ENCODE measurements at regions of chr20 and their contacts with region 1.

Region 1: GRCh38 chr20:45823949-45824835 is 2.9 kb downstream of the TNNC2 start:
- DNase-seq: no peak
- H3K4me3 ChIP-seq: no peak overlapping the region
- H3K27me3 ChIP-seq: no peaks in the 10 kb centered on the region; the same call in 1 of the 2 replicates
- CTCF ChIP-seq: peak; percentile 58

Region 2: GRCh38 chr20:45781391-45781931 is 42.7 kb before region 1 on chr20:
- CTCF ChIA-PET with region 1: no interaction called
- POLR2A ChIA-PET with region 1: no interaction called
- DNase-seq: peak; percentile 67
- H3K4me3 ChIP-seq: no peak overlapping the region
- H3K27me3 ChIP-seq: peaks cover 4% of the 10 kb centered on the region
- CTCF ChIP-seq: no peak

Region 3: GRCh38 chr20:45812157-45813020 is 11.8 kb before region 1 on chr20 and contains the start of gene UBE2C:
- CTCF ChIA-PET with region 1: interaction called, 11 read pairs
- POLR2A ChIA-PET with region 1: interaction called, 8 read pairs
- DNase-seq: peak; percentile 99
- H3K4me3 ChIP-seq: peak within 1 kb of the TSS; percentile 60
- H3K27me3 ChIP-seq: no peaks in the 10 kb centered on the region
- CTCF ChIP-seq: no peak
- polyA plus RNA-seq, gene UBE2C: 70.6 and 90.8 TPM in 2 replicates

Region 4: GRCh38 chr20:45880988-45881788 is 57.0 kb after region 1 on chr20 and contains the start of gene ZSWIM1:
- CTCF ChIA-PET with region 1: interaction called, 3 read pairs
- POLR2A ChIA-PET with region 1: interaction called, 10 read pairs
- DNase-seq: peak; percentile 97
- H3K4me3 ChIP-seq: peak within 1 kb of the TSS; percentile 68
- H3K27me3 ChIP-seq: no peaks in the 10 kb centered on the region
- CTCF ChIP-seq: no peak
- polyA plus RNA-seq, gene ZSWIM1: 4.9 and 6.0 TPM in 2 replicates

Measured in BJ (cell line).